ENCODE measurements at regions of chr3 and their contacts with region 1.

Region 1: DNA sequence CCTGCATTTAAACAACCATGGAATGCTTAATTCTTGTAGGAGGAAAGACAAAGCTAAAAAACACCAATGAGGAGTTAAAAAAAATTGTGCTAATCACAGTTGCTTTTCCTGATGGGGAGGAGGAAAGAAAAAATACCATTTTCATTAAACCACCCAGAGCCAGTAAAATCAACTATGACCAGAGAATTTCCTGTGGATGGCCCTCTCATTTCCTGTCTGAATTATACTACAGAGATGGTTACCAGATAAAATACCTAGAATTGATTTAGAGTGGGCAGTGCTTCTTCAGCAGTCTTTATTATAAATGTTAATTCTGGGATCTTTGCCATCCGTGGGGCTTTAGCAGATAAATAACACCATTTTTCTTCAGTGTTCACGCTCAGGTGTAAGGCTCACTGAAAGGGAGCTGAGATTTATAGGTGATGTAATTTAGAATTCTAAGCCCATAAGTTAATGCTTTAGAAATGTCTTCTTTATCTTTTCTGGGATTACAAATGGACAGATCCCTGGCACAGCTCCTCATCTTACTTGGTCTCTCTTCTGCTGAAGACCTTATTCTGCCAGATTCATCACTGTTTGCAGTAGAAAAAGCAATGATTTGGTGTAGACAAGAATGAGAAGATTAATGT is 37.9 kb downstream of the RETNLB start:
- DNase-seq: no peak
- H3K4me3 ChIP-seq: no peak overlapping the region
- H3K27ac ChIP-seq: no peak overlapping the region
- H3K4me1 ChIP-seq: no peaks in the 10 kb centered on the region
- H3K27me3 ChIP-seq: no peaks in the 10 kb centered on the region
- CTCF ChIP-seq: no peak
- EP300 ChIP-seq: no peak
- POLR2A ChIP-seq: no peak

Region 2: DNA sequence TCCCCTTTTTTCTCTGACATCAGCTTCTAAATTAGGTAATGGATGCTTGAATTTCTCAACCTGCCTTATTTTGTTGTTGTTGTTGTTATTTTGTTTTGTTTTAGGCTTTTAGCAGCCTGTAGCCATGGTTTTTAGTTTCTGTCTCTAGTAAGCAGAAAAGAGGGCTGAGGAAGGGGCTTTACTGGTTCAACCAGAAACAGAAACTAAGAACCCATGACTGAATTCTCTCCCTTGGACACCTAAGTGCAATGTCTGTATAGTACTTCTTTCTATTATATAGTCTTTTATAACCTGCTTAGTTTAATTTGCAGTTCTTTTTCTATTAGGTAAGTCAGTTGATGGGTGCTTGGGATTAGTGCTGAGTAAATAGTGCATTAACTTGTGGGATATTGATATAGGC is 1067.5 kb before region 1 on chr3:
- in situ Hi-C with region 1: no loop called
- intact Hi-C with region 1: loop called (anchors 5 kb)
- DNase-seq: no peak
- H3K4me3 ChIP-seq: no peak overlapping the region
- H3K27ac ChIP-seq: no peak overlapping the region
- H3K4me1 ChIP-seq: peaks cover 0 to 5% (median 0%) of the 10 kb centered on the region in 4 donors
- H3K27me3 ChIP-seq: no peaks in the 10 kb centered on the region
- CTCF ChIP-seq: no peak
- EP300 ChIP-seq: no peak
- POLR2A ChIP-seq: no peak

Region 3: DNA sequence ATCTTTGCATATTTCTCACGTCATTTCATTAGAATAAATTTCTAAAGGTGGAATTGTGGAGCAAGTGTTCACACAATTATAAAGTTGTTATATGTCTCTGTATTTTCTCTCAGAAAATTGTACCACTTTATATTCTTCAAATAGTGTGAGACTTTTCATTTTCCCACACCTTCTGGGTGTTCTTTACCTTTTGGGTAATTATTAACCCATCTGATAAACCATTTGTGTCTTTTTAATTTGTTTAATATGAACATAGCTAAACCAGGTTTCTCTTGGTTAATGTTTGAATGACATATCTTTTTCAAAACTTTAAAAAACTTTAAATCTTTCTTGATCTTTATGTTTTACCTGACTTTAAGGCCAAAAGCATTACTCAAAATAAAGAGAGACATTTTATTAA is 89.3 kb before region 1 on chr3:
- in situ Hi-C with region 1: no loop called
- intact Hi-C with region 1: no loop called
- DNase-seq: no peak
- H3K4me3 ChIP-seq: no peak overlapping the region
- H3K27ac ChIP-seq: no peak overlapping the region
- H3K4me1 ChIP-seq: no peaks in the 10 kb centered on the region
- H3K27me3 ChIP-seq: no peaks in the 10 kb centered on the region
- CTCF ChIP-seq: no peak
- EP300 ChIP-seq: no peak
- POLR2A ChIP-seq: no peak

Measured in transverse colon (tissue), 4 donors.